ENCODE measurements at regions of chr4 and their contacts with region 1.

Region 1: DNA sequence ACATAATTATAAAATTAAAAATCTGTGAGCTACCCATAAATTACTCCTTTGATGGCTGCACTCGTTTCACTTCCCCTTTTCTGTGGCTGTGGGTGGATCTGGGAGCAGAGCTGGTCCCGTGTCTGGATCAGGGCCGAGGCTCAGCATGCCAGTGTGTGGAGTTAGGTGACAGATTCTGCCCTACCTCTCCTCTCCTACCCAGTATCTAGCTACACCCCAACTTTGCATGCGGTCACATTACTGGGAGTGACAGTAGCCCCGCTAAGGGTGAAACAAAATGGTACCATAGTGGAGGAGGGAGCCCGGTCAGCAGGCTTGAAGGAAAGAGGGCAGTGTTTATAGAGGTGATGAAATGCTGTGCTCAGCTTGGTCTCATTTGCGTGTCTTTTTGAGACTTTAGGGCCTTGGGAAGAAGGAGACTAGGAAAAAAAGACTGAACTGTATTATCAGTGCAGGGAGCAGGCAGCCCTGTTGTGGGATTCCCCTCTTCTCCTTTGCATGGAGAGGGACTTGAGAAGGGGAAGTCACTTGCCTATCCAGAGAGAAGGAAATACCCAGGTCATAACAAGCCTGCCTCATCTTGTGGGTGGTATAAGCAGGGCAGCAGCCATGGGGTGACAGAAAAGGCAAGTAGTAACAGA is 48.4 kb downstream of the ARHGAP10 start:
- DNase-seq: peak in 2 of 5 donors; percentile 55 to 57
- ATAC-seq: peak; percentile 50 to 68 (median 52)
- H3K4me3 ChIP-seq: peak overlapping the region in 1 of 12 donors; percentile 28
- H3K27ac ChIP-seq: peak overlapping the region in 6 of 12 donors; percentile 2 to 74 (median 20)
- H3K4me1 ChIP-seq: peaks cover 0 to 67% (median 57%) of the 10 kb centered on the region in 12 donors
- H3K27me3 ChIP-seq: no peaks in the 10 kb centered on the region
- CTCF ChIP-seq: no peak
- POLR2A ChIP-seq: no peak

Region 2: DNA sequence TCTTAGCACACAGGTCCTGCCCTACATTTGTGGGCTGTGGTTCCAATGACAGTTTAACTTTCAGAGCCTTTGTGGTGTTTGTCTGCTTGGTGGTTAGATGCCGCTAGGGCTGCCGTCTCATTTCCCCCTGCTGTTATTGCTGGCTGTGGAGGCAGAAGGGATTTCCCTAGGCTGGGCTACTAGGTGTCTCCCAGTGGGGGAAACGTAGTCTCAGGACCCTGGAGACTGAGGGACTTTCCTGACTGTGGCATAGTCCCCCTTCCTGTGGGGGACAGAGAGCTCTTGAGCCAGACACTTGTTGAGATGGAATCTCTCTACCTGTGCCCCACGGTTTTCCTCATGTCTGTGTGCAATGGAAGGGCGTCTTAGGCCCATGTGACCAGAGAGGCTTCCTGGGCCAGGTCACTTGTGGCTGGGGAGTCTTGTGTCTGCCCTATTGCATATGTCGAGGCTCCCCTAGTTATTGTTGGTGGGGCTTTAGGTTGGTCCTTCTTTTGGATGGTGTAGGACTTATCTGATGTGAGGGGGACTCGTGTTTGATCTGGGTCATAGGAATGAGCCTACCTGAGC is 19.8 kb after region 1 on chr4:
- intact Hi-C with region 1: loop called in 1 of 10 experiments (anchors 1 kb)
- DNase-seq: no peak
- ATAC-seq: peak in 3 of 4 donors; percentile 22 to 41 (median 39)
- H3K4me3 ChIP-seq: no peak overlapping the region
- H3K27ac ChIP-seq: peak overlapping the region in 9 of 12 donors; percentile 0 to 62 (median 45)
- H3K4me1 ChIP-seq: peaks cover 0 to 55% (median 40%) of the 10 kb centered on the region in 12 donors
- H3K27me3 ChIP-seq: no peaks in the 10 kb centered on the region
- CTCF ChIP-seq: no peak
- POLR2A ChIP-seq: no peak

Region 3: DNA sequence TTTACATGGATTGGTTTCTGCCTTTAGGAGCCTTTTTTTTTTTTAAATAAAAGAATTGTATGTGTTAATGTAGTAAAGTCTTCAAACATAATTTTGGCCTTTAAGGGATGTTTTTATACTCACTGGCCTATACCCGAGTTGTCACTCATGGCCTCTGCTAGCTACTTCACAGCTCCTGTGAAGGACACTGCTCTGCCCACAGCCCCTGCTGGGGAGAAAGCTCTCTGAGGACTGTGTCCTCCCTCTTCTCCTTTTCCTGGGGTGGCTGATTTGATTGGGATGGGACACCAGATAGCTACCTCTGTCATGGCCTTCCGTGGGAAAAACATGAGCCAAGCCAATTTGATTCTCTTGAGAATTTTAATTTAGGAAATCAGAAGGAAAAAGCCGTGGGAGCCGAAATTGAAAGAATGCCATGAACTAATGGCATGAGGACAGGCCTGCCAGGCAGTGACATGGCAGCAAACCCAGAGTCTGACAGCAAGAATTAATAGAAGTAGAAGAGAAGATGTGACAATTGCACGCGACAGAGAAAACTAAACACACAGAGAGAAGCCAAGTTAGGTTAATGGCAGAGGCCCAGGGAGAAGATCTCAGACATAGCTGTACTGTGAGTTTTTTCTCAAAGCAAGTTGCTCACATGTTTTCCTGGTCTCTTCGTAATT is 33.0 kb after region 1 on chr4:
- intact Hi-C with region 1: loop called in 1 of 10 experiments (anchors 5 kb)
- DNase-seq: no peak
- ATAC-seq: peak in 3 of 4 donors; percentile 38 to 55 (median 54)
- H3K4me3 ChIP-seq: no peak overlapping the region
- H3K27ac ChIP-seq: peak overlapping the region; percentile 26 to 90 (median 76)
- H3K4me1 ChIP-seq: peaks cover 3 to 95% (median 80%) of the 10 kb centered on the region in 12 donors
- H3K27me3 ChIP-seq: no peaks in the 10 kb centered on the region
- CTCF ChIP-seq: peak in 2 of 12 donors; percentile 7 to 16
- POLR2A ChIP-seq: no peak

Region 4: GRCh38 chr4:147846318-147847155 is 66.3 kb after region 1 on chr4:
- intact Hi-C with region 1: no loop called
- DNase-seq: no peak
- ATAC-seq: no peak
- H3K4me3 ChIP-seq: no peak overlapping the region
- H3K27ac ChIP-seq: peak overlapping the region in 11 of 12 donors; percentile 8 to 69 (median 29)
- H3K4me1 ChIP-seq: peaks cover 3 to 76% (median 40%) of the 10 kb centered on the region in 12 donors
- H3K27me3 ChIP-seq: no peaks in the 10 kb centered on the region
- CTCF ChIP-seq: no peak
- POLR2A ChIP-seq: no peak

Region 5: DNA sequence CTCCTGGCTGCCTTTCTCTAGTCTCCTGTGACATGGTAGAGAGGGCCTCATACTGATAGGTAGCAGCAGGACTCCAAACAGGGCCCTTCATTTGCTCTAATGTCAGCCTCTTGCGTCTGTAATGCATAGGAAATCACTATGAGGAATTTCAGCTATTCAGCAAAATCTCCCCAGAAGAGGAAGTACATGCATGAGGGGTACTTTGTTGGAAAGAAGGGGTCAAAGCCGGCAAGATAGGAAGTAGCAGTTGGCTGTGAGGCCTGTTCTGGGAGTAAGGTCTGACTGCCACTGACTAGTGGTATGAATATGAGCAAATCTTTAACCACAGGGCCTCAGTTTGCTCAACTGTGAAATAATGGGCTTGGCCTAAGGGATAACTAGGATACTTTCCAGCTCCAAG is 234.8 kb after region 1 on chr4:
- intact Hi-C with region 1: no loop called
- DNase-seq: no peak
- ATAC-seq: peak in 2 of 4 donors; percentile 35
- H3K4me3 ChIP-seq: no peak overlapping the region
- H3K27ac ChIP-seq: peak overlapping the region in 1 of 12 donors; percentile 50
- H3K4me1 ChIP-seq: peaks cover 0 to 36% (median 18%) of the 10 kb centered on the region in 12 donors
- H3K27me3 ChIP-seq: no peaks in the 10 kb centered on the region
- CTCF ChIP-seq: no peak
- POLR2A ChIP-seq: no peak

Measured in heart left ventricle (tissue), 16 donors.